Panc1 (cell line): ENCODE measurements at regions of chr19 and their contacts with region 1.

Region 1: DNA sequence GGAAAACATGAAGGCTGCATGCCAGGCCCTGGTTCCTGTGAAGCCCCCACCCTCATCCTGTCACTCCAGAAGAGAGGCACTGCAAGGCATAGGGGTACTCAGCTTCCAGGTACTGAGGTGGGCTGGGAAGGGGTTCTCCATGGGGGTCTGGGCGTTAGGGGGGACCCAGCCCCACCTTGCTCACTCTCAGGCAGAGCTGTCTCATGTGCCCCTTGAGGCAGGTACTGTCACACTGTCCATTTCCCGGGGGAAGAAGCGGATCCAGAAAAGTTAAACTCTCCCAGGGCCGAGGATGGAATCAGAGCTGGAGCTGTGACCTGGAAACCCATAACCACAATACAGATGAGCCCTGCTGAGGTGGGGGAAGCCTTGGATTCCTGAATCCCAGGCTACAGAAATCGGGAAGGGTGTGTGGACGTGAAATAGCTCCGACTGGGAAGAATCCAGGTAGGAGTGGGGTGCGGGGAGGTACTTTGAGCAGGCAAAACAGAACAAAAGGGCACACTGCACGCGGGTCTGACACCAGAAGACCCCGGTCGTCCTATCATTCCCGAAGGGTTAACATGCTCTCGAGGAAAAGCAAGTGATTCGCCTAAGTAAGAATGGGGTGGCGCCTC is 541 bp upstream of the USE1 start:
- DNase-seq: no peak
- ATAC-seq: peak; percentile 2
- H3K4me3 ChIP-seq: peak overlapping the region; percentile 49 to 61
- H3K27ac ChIP-seq: peak overlapping the region; percentile 90
- H3K4me1 ChIP-seq: 0 out of 2 replicates have a peak, but pooled peaks cover 5% of the 10 kb centered on the region
- H3K27me3 ChIP-seq: no peaks in the 10 kb centered on the region
- CTCF ChIP-seq: no peak

Region 2: DNA sequence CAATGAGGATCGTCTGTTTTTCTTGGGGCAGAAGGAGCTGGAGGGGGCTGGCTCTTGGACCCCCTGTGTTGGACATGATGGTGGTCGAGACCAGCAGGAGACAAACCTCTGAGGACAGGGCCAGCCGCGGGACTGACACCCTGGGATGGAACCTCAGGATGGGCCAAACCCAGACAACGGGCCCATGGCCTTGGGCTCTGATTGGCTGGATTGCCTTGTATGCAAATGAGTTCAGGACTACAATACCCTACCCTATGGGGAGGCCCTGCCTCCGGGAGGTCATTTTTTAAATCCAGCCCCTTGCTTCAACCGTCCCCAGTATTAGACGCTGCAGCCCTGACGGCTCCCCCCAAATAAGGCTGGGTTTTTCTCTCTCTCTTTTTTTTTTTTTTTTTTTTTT is 679.1 kb after region 1 on chr19:
- CTCF ChIA-PET with region 1: no interaction called
- POLR2A ChIA-PET with region 1: interaction called, 18 read pairs
- in situ Hi-C with region 1: no loop called
- intact Hi-C with region 1: no loop called
- DNase-seq: no peak
- ATAC-seq: no peak
- H3K4me3 ChIP-seq: no peak overlapping the region
- H3K27ac ChIP-seq: no peak overlapping the region
- H3K4me1 ChIP-seq: no peaks in the 10 kb centered on the region
- H3K27me3 ChIP-seq: no peaks in the 10 kb centered on the region
- CTCF ChIP-seq: no peak